Activated CD4-positive, alpha-beta memory T cell treated with anti-CD3 and anti-CD28 coated beads, Interleukin-2, amount 10 ng/mL, durations not matched to agents 7 days and 5 days (primary cell): ENCODE measurements at regions of chr1 and their contacts with region 1.

Region 1: GRCh38 chr1:203273206-203273868 is 32.0 kb upstream of the BTG2 start:
- DNase-seq: peak; percentile 93
- H3K4me3 Mint-ChIP-seq: peak overlapping the region; percentile 38
- H3K27ac Mint-ChIP-seq: peak overlapping the region; percentile 49
- H3K4me1 Mint-ChIP-seq: peaks cover 65% of the 10 kb centered on the region
- H3K27me3 Mint-ChIP-seq: no peaks in the 10 kb centered on the region

Region 2: DNA sequence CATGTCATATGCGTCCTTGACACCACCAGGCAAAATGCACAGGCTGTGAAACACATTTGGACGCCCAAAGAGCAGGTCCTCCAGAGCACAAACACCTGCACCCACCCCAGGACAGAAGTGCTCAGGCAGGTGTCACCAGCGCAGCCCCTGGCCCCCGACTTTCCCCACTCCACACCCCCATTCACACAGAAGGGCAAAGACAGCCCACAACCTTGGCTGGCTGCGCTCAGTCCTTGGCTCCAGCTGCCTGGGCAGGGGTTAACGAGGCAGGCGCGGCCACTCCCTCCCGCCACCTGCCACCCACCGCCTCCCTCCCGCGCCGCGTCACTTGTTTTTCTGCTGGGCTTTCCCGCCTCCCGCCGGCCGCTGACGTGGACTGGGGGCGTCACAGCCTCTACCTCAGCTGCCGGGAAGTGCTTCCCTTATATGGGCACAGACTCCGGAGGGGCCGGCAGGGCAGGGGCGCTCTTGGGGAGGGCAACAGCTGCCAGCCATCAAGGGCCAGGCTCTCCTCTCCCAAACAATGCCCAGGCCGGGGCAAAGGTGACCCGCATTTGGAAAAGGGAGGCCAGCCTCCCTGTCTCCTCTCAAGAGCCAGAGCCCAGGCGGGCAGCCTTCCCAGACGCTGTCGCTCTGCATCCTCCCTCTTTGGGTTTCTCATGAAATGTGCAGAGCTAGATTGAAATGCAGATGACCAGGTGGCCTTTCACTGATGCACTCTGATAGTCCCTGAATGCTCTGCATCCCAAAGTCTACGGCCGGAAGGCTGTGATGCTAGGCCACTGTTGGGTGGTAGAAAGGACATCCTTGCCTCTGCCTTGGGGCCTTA is 17.1 kb after region 1 on chr1:
- CTCF ChIA-PET with region 1: interaction called, 187 read pairs
- POLR2A ChIA-PET with region 1: interaction called, 196 read pairs
- DNase-seq: peak; percentile 98
- H3K4me3 Mint-ChIP-seq: peak overlapping the region; percentile 76
- H3K27ac Mint-ChIP-seq: peak overlapping the region; percentile 100
- H3K4me1 Mint-ChIP-seq: peaks cover 73% of the 10 kb centered on the region
- H3K27me3 Mint-ChIP-seq: no peaks in the 10 kb centered on the region

Region 3: DNA sequence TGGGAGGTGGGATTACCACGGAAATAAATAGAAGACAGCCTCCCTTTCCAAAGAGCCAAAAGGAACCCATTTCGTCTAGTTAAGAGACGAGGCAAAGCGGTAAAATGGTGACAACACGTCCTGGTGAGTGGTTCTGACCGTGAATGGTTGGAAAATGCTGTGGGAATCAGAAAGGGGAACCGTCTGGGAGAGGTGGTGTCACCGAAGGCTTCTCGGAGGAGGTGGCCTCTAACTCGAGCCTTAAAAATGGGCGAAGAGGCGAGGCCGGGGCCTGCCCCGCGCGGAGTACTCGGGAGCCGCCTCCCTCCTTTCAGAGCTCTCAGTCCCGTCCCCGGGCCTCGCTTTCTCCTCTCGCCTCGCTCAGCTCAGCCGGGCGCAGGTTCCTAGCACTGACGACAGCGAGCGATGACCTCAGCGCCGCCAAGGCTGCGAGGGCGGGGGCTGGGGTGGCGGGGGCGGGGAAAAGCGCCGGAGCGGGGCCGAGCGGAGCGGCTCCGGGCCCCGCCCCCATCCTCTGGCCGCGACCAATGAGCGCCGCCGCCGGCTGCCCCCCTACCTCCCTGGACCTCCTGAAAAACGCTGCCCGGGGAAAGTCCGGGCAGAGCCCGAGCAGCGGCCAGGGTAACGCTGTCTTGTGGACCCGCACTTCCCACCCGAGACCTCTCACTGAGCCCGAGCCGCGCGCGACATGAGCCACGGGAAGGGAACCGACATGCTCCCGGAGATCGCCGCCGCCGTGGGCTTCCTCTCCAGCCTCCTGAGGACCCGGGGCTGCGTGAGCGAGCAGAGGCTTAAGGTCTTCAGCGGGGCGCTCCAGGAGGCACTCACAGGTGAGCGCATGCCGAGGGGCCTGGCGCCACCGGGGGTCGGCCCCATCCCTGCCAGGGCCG is 31.8 kb after region 1 on chr1 and contains the start of gene BTG2:
- CTCF ChIA-PET with region 1: interaction called, 135 read pairs
- POLR2A ChIA-PET with region 1: interaction called, 646 read pairs
- DNase-seq: peak; percentile 93
- H3K4me3 Mint-ChIP-seq: peak within 1 kb of the TSS; percentile 98
- H3K27ac Mint-ChIP-seq: peak within 1 kb of the TSS; percentile 92
- H3K4me1 Mint-ChIP-seq: peaks cover 68% of the 10 kb centered on the region
- H3K27me3 Mint-ChIP-seq: no peaks in the 10 kb centered on the region
- total RNA-seq, gene BTG2: 116 TPM

Region 4: GRCh38 chr1:203320591-203321272 is 47.4 kb after region 1 on chr1:
- CTCF ChIA-PET with region 1: interaction called, 238 read pairs
- POLR2A ChIA-PET with region 1: interaction called, 94 read pairs
- DNase-seq: peak; percentile 83
- H3K4me3 Mint-ChIP-seq: peak overlapping the region; percentile 38
- H3K27ac Mint-ChIP-seq: peak overlapping the region; percentile 83
- H3K4me1 Mint-ChIP-seq: peaks cover 70% of the 10 kb centered on the region
- H3K27me3 Mint-ChIP-seq: peaks cover 3% of the 10 kb centered on the region

Region 5: GRCh38 chr1:203326830-203327683 is 53.7 kb after region 1 on chr1:
- CTCF ChIA-PET with region 1: interaction called, 238 read pairs
- POLR2A ChIA-PET with region 1: interaction called, 94 read pairs
- DNase-seq: peak; percentile 95
- H3K4me3 Mint-ChIP-seq: peak overlapping the region; percentile 75
- H3K27ac Mint-ChIP-seq: peak overlapping the region; percentile 95
- H3K4me1 Mint-ChIP-seq: peaks cover 65% of the 10 kb centered on the region
- H3K27me3 Mint-ChIP-seq: no peaks in the 10 kb centered on the region

Region 6: GRCh38 chr1:203906932-203907331 is 633.6 kb after region 1 on chr1:
- CTCF ChIA-PET with region 1: no interaction called
- POLR2A ChIA-PET with region 1: no interaction called
- DNase-seq: no peak
- H3K4me3 Mint-ChIP-seq: no peak overlapping the region
- H3K27ac Mint-ChIP-seq: no peak overlapping the region
- H3K4me1 Mint-ChIP-seq: no peaks in the 10 kb centered on the region
- H3K27me3 Mint-ChIP-seq: peaks cover 10% of the 10 kb centered on the region